Activated CD4-positive, alpha-beta memory T cell treated with anti-CD3 and anti-CD28 coated beads for 36 hours (primary cell): ENCODE measurements at regions of chr17 and their contacts with region 1.

Region 1: DNA sequence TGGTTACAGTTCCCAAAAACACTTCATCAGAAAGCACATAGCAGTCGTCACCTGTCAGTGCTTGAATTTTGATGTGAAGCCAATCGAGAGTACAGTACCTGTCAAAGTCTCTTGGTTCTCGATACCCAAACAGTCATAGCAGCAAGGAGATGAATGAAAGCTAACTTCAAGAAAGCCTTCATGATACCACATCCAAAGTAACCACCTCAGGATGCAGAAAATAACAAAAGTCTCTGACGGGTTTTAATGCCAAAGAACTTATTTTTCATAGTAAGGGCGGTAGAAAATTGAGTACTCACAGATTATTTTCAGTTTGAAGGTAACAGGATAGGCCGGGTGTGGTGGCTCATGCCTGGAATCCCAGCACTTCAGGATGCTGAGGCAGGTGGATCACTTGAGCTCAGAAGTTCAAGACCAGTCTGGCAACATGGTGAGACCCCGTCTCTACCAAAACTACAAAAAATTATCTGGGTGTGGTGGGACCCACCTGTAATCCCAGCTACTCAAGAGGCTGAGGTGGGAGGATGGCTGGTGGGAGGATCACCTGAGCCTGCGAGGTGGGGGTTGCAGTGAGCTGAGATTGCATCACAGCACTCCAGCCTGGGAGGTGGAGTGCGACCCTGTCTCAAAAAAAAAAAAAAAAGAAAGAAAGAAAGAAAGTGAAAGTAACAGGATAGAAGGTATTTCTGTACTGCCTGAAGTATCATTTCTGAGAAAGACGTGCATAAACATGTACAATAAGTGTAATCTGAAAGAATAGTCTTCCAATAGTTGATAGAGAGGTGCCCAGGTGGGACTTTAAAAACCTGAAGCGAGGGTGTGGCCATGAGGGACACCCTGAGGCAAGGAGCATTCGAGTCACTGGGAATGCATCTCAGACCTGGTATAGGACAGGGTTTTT is 15.4 kb downstream of the MFSD11 start:
- DNase-seq: peak; percentile 52
- H3K4me3 Mint-ChIP-seq: peak overlapping the region; percentile 80
- H3K27ac Mint-ChIP-seq: peak overlapping the region; percentile 97
- H3K4me1 Mint-ChIP-seq: peaks cover 25% of the 10 kb centered on the region
- H3K27me3 Mint-ChIP-seq: no peaks in the 10 kb centered on the region

Region 2: DNA sequence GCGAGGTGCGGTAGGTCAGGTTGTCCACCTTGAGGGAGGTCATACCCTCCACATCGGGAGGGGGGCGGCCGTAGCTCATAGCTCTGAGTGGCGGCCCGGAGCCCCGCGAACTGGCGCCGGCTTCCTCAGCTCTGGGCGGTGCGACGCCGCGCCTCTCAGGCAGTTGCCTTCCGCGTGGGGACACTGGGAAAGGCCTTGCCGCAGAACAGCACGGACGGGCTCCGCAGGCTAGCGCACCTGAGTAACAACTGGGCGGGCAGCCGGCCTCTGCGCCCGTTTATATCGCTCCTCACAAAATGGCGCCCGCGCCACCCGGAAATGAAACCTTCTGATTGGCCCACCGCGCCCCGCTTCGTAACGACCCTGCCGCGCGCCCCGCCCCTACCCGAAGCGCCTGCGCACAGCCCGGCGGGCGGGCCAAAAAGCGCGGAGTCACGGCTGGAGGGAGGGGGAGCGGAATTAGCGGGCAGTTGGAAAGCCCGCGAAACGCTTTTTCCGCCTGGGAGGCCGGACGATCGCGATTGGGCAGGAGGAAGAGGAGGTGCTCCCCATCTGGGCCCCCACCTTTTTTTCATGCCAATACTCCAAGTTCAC is 16.1 kb before region 1 on chr17 and contains the start of gene SRSF2:
- CTCF ChIA-PET with region 1: no interaction called
- POLR2A ChIA-PET with region 1: interaction called, 13 read pairs
- intact Hi-C with region 1: loop called (anchors 1 kb)
- DNase-seq: peak; percentile 99
- H3K4me3 Mint-ChIP-seq: peak within 1 kb of the TSS; percentile 95
- H3K27ac Mint-ChIP-seq: peak within 1 kb of the TSS; percentile 100
- H3K4me1 Mint-ChIP-seq: peaks cover 46% of the 10 kb centered on the region
- H3K27me3 Mint-ChIP-seq: no peaks in the 10 kb centered on the region
- total RNA-seq, gene SRSF2: 299 TPM

Region 3: GRCh38 chr17:76772842-76773525 is 19.7 kb after region 1 on chr17:
- CTCF ChIA-PET with region 1: interaction called, 3 read pairs
- POLR2A ChIA-PET with region 1: interaction called, 9 read pairs
- intact Hi-C with region 1: loop called (anchors 1 kb)
- DNase-seq: peak; percentile 71
- H3K4me3 Mint-ChIP-seq: peak overlapping the region; percentile 67
- H3K27ac Mint-ChIP-seq: peak overlapping the region; percentile 92
- H3K4me1 Mint-ChIP-seq: peaks cover 23% of the 10 kb centered on the region
- H3K27me3 Mint-ChIP-seq: no peaks in the 10 kb centered on the region

Region 4: GRCh38 chr17:76791053-76791980 is 38.0 kb after region 1 on chr17:
- CTCF ChIA-PET with region 1: no interaction called
- POLR2A ChIA-PET with region 1: no interaction called
- intact Hi-C with region 1: loop called (anchors 5 kb)
- DNase-seq: peak; percentile 63
- H3K4me3 Mint-ChIP-seq: peak overlapping the region; percentile 2
- H3K27ac Mint-ChIP-seq: no peak overlapping the region
- H3K4me1 Mint-ChIP-seq: peaks cover 13% of the 10 kb centered on the region
- H3K27me3 Mint-ChIP-seq: no peaks in the 10 kb centered on the region